Activated CD8-positive, alpha-beta memory T cell treated with anti-CD3 and anti-CD28 coated beads, Interleukin-2, amount 10 ng/mL, durations not matched to agents 7 days and 5 days (primary cell): ENCODE measurements at regions of chr19 and their contacts with region 1.

Region 1: GRCh38 chr19:48363810-48364563 is at the starts of genes SYNGR4 and TMEM143:
- DNase-seq: peak; percentile 100
- ATAC-seq: peak; percentile 90
- H3K4me3 Mint-ChIP-seq: peak within 1 kb of the TSS; percentile 81
- H3K27ac Mint-ChIP-seq: peak within 1 kb of the TSS; percentile 92
- H3K4me1 Mint-ChIP-seq: peaks cover 16% of the 10 kb centered on the region
- H3K27me3 Mint-ChIP-seq: no peaks in the 10 kb centered on the region
- total RNA-seq, gene SYNGR4: not detected
- total RNA-seq, gene TMEM143: 16.7 to 22.3 TPM

Region 2: GRCh38 chr19:48321622-48322591 is 42.1 kb before region 1 on chr19:
- CTCF ChIA-PET with region 1: interaction called, 10 read pairs
- DNase-seq: peak; percentile 99
- ATAC-seq: peak; percentile 66
- H3K4me3 Mint-ChIP-seq: peak overlapping the region; percentile 84
- H3K27ac Mint-ChIP-seq: peak overlapping the region; percentile 99
- H3K4me1 Mint-ChIP-seq: peaks cover 57% of the 10 kb centered on the region
- H3K27me3 Mint-ChIP-seq: no peaks in the 10 kb centered on the region

Region 3: DNA sequence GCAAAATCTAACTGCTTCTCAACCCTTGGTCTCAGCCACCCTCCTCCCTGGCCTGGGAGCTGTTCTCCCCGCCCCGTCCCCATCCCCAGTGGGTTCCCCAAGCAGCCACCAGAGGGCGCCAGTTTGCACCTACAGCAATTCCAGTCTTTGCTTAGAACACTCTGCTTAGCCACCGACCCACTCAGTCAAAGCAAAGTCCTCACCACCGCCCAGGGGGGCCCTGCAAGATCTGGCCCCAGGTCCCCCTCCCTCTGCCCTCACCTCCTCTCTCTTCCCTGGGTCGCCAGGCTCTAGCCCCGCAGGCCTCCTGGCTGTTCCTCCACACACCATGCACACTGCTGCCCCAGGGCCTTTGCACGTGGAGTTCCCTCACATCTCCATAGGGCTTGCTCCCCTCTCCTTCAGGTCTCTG is 12.6 kb before region 1 on chr19:
- CTCF ChIA-PET with region 1: interaction called, 21 read pairs
- DNase-seq: peak; percentile 89
- ATAC-seq: peak; percentile 95
- H3K4me3 Mint-ChIP-seq: no peak overlapping the region
- H3K27ac Mint-ChIP-seq: no peak overlapping the region
- H3K4me1 Mint-ChIP-seq: peaks cover 9% of the 10 kb centered on the region
- H3K27me3 Mint-ChIP-seq: no peaks in the 10 kb centered on the region

Region 4: GRCh38 chr19:48391107-48391986 is 27.4 kb after region 1 on chr19 and contains the start of gene KDELR1:
- CTCF ChIA-PET with region 1: interaction called, 28 read pairs
- DNase-seq: peak; percentile 77
- ATAC-seq: peak; percentile 79
- H3K4me3 Mint-ChIP-seq: peak within 1 kb of the TSS; percentile 93
- H3K27ac Mint-ChIP-seq: peak within 1 kb of the TSS; percentile 92
- H3K4me1 Mint-ChIP-seq: peaks cover 21% of the 10 kb centered on the region
- H3K27me3 Mint-ChIP-seq: peaks cover 32% of the 10 kb centered on the region
- total RNA-seq, gene KDELR1: 64.8 to 72.2 TPM

Region 5: DNA sequence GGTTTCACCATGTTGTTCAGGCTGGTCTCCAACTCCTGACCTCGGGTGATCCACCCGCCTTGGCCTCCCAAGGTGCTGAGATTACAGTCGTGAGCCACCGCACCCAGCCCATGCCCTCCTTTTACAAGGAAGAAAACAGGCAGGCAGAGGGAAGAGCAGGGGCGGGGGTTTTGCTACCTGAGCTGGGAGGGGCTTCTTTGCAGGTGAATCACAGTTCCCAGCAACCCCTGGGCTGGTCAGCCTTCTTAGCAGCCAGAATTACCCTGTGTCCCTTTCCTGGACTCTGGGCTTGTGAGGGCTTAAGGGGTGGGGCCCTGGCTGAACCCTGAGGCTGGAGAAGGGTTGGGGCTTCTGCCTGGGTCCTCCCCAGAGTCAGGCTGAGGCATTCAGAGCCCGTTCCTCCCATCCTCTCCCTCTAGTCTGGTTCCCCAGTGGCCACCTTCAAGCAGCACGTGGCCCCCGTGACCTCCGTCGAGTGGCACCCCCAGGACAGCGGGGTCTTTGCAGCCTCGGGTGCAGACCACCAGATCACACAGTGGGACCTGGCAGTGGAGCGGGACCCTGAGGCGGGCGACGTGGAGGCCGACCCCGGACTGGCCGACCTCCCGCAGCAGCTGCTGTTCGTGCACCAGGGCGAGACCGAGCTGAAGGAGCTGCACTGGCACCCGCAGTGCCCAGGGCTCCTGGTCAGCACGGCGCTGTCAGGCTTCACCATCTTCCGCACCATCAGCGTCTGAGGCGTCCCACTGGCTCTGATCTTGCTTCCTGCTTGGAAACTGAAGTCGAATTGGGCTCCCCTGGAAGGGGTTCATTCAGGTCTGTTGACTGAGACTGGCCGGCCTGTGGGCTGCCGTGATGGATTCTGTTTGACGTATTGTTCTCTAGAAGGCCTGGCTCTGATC is 88.6 kb after region 1 on chr19:
- CTCF ChIA-PET with region 1: no interaction called
- DNase-seq: no peak
- ATAC-seq: no peak
- H3K4me3 Mint-ChIP-seq: no peak overlapping the region
- H3K27ac Mint-ChIP-seq: no peak overlapping the region
- H3K4me1 Mint-ChIP-seq: peaks cover 10% of the 10 kb centered on the region
- H3K27me3 Mint-ChIP-seq: no peaks in the 10 kb centered on the region

Region 6: DNA sequence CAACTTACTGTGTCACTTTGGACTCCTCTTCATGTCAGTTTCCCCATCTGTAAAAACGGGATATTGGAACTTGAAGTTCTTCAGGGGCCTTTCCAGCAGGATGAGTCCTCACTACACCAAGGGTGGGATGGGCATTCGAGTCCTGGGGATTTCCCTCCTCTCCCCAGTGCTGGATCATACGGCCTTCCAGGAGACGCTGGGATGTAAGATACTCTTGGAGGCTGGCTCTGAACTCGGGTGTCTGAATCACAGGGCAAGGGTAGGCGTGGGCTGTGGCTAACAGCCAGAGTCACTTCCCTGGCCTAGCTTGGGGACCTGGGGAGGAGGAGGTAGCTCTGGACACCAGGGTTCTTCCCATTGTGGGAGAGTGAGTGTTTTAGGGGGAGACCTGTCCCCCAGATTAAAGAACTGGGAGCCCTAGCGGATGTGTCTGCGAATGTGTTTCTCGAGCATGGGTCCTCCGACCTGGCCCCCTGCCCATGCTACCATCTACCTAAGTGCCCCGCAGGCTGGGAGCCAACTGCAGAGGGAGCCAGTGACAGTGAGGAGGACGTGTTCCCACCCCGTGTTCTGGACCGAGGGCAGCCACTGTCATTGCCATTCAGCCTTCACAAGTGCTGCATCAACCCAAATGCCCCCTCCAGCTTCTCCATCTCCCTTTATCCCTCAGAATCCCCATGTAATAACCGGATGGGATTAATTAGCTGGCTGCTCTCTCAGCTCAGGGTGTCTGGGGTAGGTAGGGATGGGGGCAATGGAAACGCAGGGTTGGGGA is 102.8 kb after region 1 on chr19:
- CTCF ChIA-PET with region 1: no interaction called
- DNase-seq: no peak
- ATAC-seq: no peak
- H3K4me3 Mint-ChIP-seq: no peak overlapping the region
- H3K27ac Mint-ChIP-seq: no peak overlapping the region
- H3K4me1 Mint-ChIP-seq: peaks cover 35% of the 10 kb centered on the region
- H3K27me3 Mint-ChIP-seq: no peaks in the 10 kb centered on the region